K562 (cell line): ENCODE measurements at regions of chr3 and their contacts with region 1.

Region 1: GRCh38 chr3:93961489-93961888 is 12.2 kb downstream of the PROS1 start:
- DNase-seq: no peak
- ATAC-seq: no peak
- H3K4me3 ChIP-seq: no peak overlapping the region
- H3K27ac ChIP-seq: no peak overlapping the region
- H3K4me1 ChIP-seq: no peaks in the 10 kb centered on the region
- H3K27me3 ChIP-seq: no peaks in the 10 kb centered on the region
- CTCF ChIP-seq: no peak
- EP300 ChIP-seq: no peak
- POLR2A ChIP-seq: no peak
- RAD21 ChIP-seq: no peak

Region 2: DNA sequence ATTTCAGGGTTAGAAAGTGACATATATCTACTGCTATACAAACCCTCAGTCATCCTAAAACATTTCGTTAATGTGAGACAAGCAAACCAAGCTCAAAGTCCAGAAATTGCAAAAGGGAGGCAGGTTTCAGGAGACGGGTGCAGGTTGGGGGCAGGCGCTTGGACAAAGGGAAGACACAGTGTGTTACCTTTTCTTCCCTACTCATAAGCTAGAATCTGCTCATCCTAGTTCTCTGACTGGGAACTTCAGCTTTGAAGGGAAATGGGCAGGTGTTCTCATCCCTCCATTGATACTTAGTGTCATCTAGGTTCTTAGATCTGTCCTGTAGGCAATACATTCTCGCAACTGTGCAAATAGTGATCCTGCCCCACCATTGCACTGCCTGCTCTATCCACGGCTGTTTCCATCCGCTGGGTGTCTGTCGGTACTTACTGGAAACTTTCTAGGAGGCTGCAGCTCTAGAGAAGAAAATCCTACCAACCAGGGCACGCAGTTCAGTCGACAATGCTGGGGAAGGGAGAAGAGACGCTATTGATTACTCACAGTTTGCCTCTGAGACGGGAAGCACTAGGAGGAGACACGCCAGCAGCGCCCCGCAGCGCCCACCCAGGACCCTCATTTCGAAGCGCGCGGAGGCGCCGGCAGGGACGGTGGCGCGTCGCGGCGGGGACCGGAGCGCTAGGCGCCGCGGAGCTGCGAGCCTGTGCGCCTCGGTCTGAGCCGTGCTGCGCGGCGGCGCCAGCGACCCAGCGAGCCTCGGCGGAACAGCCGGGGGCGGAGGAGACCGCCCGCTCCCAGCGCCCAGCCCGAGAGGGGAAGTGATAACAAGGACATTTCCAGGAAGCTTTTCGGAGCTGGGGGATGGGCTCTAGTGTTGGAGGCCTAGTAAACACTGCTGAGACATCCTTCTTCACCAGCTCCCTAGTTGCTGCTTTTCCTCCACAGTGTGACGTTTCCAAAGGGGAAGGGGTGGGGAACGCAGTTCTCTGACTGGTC is 11.9 kb after region 1 on chr3 and contains the start of gene PROS1:
- CTCF ChIA-PET with region 1: no interaction called
- POLR2A ChIA-PET with region 1: interaction called, 14 read pairs
- in situ Hi-C with region 1: no loop called
- intact Hi-C with region 1: no loop called
- DNase-seq: peak; percentile 60 to 93 (median 70)
- ATAC-seq: peak; percentile 93
- H3K4me3 ChIP-seq: peak within 1 kb of the TSS; percentile 79
- H3K27ac ChIP-seq: peak within 1 kb of the TSS; percentile 92
- H3K4me1 ChIP-seq: peaks cover 11 to 19% of the 10 kb centered on the region in 2 experiments; a peak in 4 of 5 replicates
- H3K27me3 ChIP-seq: no peaks in the 10 kb centered on the region
- CTCF ChIP-seq: no peak
- EP300 ChIP-seq: peak; percentile 66; the same call in 1 of the 2 replicates
- POLR2A ChIP-seq: peak; percentile 61
- RAD21 ChIP-seq: peak; percentile 14 to 25; a peak in 3 of 4 replicates
- polyA plus RNA-seq, gene PROS1: 5.5 to 9.6 TPM

Region 3: DNA sequence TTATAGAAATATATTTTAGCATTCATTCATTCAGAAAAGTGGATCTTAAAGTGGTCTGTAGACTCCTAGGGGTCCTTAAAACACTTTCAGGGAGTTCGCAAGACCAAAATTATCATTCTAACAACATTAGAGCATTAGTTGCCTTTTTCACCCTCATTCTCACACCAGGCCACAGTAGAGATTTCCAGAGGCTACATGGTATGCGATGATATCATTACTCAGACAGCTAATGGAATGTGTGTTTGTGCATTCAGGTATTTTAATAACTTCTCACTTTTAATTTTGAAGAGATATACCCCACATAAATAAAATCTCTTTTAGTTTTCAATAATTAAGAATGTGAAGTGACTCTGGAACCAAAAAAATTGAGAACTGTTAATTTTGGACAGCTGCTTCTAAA is 308.3 kb after region 1 on chr3:
- CTCF ChIA-PET with region 1: no interaction called
- POLR2A ChIA-PET with region 1: no interaction called
- in situ Hi-C with region 1: no loop called
- intact Hi-C with region 1: no loop called
- DNase-seq: no peak
- ATAC-seq: no peak
- H3K4me3 ChIP-seq: no peak overlapping the region
- H3K27ac ChIP-seq: no peak overlapping the region
- H3K4me1 ChIP-seq: no peaks in the 10 kb centered on the region
- H3K27me3 ChIP-seq: no peaks in the 10 kb centered on the region
- CTCF ChIP-seq: no peak
- EP300 ChIP-seq: no peak
- POLR2A ChIP-seq: no peak
- RAD21 ChIP-seq: no peak